Right ventricle myocardium inferior (tissue), 1 donor: ENCODE measurements at regions of chr2 and their contacts with region 1.

Region 1: GRCh38 chr2:231900972-231901371 is 25.2 kb downstream of the NPPC start:
- DNase-seq: no peak
- ATAC-seq: no peak

Region 2: DNA sequence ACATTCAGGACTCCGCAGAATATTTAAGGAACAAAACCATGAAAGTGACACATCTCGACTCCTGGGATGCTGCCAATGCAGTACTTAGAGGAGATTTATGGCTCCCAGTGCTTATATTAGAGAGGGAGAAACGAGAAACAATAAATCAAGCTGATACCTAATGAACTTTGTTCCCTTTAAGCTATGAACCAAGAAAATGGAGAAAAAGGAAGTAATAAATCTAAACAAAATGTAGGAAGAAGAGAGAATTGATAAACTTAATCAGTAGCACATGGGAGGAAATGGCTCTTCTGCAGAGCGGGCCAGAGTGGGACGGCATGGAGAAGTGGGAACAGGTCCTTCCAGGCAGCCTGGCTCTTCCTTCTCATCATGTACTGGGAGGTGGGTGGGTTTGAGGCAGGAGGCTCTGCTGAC is 17.5 kb before region 1 on chr2:
- intact Hi-C with region 1: no loop called
- DNase-seq: no peak
- ATAC-seq: no peak

Region 3: GRCh38 chr2:232327105-232328041 is 426.4 kb after region 1 on chr2:
- intact Hi-C with region 1: loop called (anchors 5 kb)
- DNase-seq: peak; percentile 89
- ATAC-seq: peak; percentile 42

Region 4: DNA sequence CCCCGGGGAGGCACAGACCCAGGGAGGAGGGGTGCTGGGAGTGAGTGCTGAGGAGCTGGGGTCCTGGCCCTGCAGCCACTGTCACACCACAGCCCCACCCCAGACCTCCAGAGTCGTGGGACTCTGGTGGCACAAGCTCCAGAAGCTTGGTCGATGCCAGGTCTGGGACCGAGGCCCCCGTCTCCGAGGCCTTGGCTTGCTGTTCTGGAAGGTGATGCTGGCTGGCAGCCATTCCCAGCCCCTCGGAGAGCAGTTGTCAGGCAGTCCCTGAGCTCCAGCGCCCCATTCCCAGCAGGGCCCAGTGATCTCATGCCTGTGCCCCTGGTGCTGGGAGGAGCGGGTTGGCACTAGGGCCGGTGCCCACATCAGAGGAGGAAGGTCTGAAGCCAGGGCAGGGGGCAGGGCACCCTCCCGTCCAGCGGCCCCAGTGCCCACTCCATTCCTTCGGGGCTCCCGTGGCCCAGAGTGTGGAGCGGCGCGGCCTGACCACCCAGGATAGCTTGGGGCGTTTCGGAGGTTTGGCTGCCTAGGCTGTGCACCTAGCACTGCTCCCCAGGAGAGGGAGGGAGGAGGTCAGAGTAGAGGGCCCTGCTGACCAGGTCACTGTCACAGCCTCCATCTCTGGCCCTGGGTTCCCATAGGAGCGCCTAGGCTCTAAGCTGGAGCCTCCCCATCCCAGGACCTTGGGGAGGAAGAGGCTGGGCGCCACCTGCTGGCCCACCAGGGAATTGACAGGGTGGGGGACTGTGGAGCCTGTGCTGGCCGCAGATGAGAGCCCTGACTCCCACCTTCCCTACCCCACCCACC is 538.2 kb after region 1 on chr2:
- intact Hi-C with region 1: loop called (anchors 1 kb)
- DNase-seq: no peak
- ATAC-seq: peak; percentile 60

Region 5: GRCh38 chr2:232521959-232522622 is 621.1 kb after region 1 on chr2:
- intact Hi-C with region 1: loop called (anchors 5 kb)
- DNase-seq: peak; percentile 87
- ATAC-seq: peak; percentile 39